Activated B cell treated with CpG ODN at 0.5 μM for 24 hours (primary cell): ENCODE measurements at regions of chr20 and their contacts with region 1.

Region 1: DNA sequence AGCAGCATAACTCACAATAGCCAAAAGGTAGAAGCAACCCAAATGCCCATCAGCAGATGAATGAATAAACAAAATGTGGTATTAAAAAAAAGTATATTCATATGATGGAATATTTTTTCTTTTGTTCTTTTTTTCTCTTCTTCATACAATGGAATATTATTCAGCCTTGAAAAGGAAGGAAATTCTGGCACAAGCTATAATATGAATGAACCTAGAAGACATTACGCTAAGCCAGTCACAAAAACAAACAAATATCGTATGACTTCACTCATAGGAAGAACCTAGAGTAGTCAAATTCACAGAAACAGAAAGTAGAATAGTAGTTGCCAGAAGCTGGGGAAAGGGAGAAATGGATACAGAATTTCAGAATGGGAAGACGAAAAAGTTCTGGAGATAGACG is 63.7 kb downstream of the RBL1 start:
- DNase-seq: no peak
- ATAC-seq: no peak
- H3K4me3 Mint-ChIP-seq: no peak overlapping the region
- H3K27ac Mint-ChIP-seq: no peak overlapping the region
- H3K4me1 Mint-ChIP-seq: no peaks in the 10 kb centered on the region
- H3K27me3 Mint-ChIP-seq: no peaks in the 10 kb centered on the region
- CTCF ChIP-seq: no peak

Region 2: DNA sequence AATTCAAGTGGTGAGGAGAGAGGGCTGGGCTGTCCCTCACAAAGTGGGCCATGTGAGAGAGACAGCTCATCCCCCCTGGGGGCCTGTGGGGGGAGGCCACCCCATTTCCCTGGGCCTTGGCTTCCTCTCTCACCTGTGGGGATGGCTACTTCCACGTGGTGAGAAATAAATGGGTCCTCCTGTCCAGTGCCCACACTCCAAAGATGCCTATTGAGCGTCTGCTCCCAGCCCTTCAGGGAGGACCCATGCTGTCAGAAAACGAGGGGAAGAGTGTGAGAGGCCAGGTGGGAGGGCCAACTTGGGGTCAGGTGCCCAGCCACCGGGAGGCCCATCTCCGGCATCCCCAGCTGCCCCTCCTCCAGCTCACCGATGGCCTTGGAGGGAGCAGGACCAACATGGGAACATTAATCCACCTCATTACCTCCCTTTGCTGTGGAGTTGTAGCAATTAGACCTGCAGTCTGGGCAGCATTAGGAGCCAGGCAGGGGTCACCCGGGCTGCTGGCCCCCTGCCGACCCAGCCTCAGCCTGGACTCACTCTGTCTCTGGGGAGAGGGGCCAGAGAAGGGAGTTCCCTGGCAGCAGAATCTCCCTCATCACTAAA is 701.0 kb before region 1 on chr20:
- CTCF ChIA-PET with region 1: no interaction called
- POLR2A ChIA-PET with region 1: no interaction called
- intact Hi-C with region 1: no loop called
- DNase-seq: no peak
- ATAC-seq: no peak
- H3K4me3 Mint-ChIP-seq: no peak overlapping the region
- H3K27ac Mint-ChIP-seq: no peak overlapping the region
- H3K4me1 Mint-ChIP-seq: no peaks in the 10 kb centered on the region
- H3K27me3 Mint-ChIP-seq: peaks cover 29% of the 10 kb centered on the region
- CTCF ChIP-seq: no peak

Region 3: DNA sequence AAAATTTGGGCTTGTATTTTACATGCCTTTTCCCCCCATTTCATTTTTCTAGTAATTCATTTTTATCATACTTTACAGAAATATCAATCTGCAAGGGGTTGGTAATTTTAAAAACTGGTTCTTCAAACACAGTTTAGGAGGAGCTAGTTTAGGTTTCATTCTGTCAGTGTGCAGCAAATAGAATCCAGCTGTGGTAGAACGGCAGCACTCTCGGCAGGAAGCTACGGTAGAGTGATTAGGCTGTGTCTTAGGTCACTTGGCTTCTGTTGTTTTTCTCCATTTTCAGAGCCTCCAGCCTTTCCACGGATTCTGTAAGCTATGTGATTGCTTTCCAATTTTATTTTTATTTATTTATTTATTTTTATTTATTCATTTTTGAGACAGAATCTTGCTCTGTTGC is 123.5 kb before region 1 on chr20:
- CTCF ChIA-PET with region 1: no interaction called
- POLR2A ChIA-PET with region 1: interaction called, 10 read pairs
- intact Hi-C with region 1: no loop called
- DNase-seq: no peak
- ATAC-seq: peak; percentile 60
- H3K4me3 Mint-ChIP-seq: no peak overlapping the region
- H3K27ac Mint-ChIP-seq: no peak overlapping the region
- H3K4me1 Mint-ChIP-seq: peaks cover 9% of the 10 kb centered on the region
- H3K27me3 Mint-ChIP-seq: no peaks in the 10 kb centered on the region
- CTCF ChIP-seq: no peak

Region 4: GRCh38 chr20:36932476-36933426 is 99.3 kb before region 1 on chr20:
- CTCF ChIA-PET with region 1: no interaction called
- POLR2A ChIA-PET with region 1: no interaction called
- intact Hi-C with region 1: no loop called
- DNase-seq: no peak
- ATAC-seq: no peak
- H3K4me3 Mint-ChIP-seq: no peak overlapping the region
- H3K27ac Mint-ChIP-seq: no peak overlapping the region
- H3K4me1 Mint-ChIP-seq: no peaks in the 10 kb centered on the region
- H3K27me3 Mint-ChIP-seq: no peaks in the 10 kb centered on the region
- CTCF ChIP-seq: no peak